A673 (cell line): ENCODE measurements at regions of chr14 and their contacts with region 1.

Region 1: DNA sequence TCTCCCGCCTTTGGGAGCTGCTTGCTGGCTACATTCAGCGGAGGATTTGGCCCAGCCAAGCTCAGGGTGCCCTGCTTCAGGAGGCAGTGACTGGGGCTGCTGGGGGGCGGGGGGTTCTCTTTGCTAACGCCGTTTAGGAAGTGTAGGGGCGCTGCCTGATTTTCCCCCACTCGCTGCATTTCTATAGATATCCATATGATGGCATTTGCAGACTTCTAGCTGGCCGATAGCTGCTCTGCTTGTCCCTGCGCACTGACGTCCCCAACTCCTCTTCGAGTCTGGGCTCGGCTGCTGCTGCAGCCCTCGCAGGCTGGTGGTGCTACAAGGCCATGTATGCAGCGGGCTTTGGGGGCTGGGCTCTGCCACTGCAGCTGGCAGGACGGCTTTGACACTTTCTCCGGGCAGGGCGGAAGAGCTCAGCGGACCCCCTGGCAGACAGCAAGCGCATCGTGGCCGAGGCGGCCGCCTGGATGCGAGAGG is 3.1 kb downstream of the LRFN5 start:
- DNase-seq: peak; percentile 95
- H3K4me3 ChIP-seq: peak overlapping the region; percentile 79
- H3K27ac ChIP-seq: peak overlapping the region; percentile 84
- H3K4me1 ChIP-seq: peaks cover 29% of the 10 kb centered on the region
- H3K27me3 ChIP-seq: no peaks in the 10 kb centered on the region
- CTCF ChIP-seq: peak; percentile 84

Region 2: DNA sequence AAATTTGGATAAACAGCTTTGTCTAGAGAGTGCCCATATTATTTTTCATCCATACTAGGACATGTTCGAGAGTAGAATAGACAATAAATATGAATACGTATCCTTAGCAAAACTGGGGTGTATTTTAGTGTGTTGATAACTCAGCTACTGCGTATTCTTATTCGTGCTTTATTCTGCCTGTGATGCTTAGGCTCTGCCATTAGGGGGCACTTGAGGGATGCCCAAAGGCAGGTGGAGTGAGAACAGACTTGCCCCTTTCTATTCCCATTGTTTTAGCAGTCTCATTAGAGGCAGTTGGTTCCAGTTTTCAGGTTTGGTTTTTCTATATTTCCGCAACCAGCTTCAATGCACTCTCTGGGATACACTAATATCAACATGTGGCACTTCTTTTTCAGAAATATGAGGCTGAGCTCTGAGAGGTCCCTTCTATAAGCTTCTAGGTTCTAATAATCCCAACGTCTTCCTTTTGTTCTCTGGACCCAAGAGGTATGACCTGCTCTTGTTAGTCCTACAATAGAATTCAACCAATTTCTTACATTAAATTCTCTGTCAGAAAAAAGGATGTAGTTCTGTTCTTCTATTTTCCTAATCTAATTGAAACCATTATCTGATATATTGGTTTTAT is 1191.9 kb before region 1 on chr14:
- CTCF ChIA-PET with region 1: no interaction called
- POLR2A ChIA-PET with region 1: no interaction called
- intact Hi-C with region 1: loop called (anchors 10 kb)
- DNase-seq: peak; percentile 66
- H3K4me3 ChIP-seq: peak overlapping the region; percentile 6
- H3K27ac ChIP-seq: no peak overlapping the region
- H3K4me1 ChIP-seq: no peaks in the 10 kb centered on the region
- H3K27me3 ChIP-seq: no peaks in the 10 kb centered on the region
- CTCF ChIP-seq: peak; percentile 89

Region 3: GRCh38 chr14:41806366-41807000 is 196.7 kb after region 1 on chr14:
- CTCF ChIA-PET with region 1: interaction called, 6 read pairs
- POLR2A ChIA-PET with region 1: interaction called, 6 read pairs
- intact Hi-C with region 1: loop called (anchors 1 kb)
- DNase-seq: no peak
- H3K4me3 ChIP-seq: no peak overlapping the region
- H3K27ac ChIP-seq: peak overlapping the region; percentile 82
- H3K4me1 ChIP-seq: peaks cover 30% of the 10 kb centered on the region
- H3K27me3 ChIP-seq: no peaks in the 10 kb centered on the region
- CTCF ChIP-seq: no peak

Region 4: GRCh38 chr14:41925409-41925808 is 315.7 kb after region 1 on chr14:
- CTCF ChIA-PET with region 1: interaction called, 4 read pairs
- POLR2A ChIA-PET with region 1: no interaction called
- intact Hi-C with region 1: loop called (anchors 1 kb)
- DNase-seq: peak; percentile 80
- H3K4me3 ChIP-seq: no peak overlapping the region
- H3K27ac ChIP-seq: no peak overlapping the region
- H3K4me1 ChIP-seq: peaks cover 9% of the 10 kb centered on the region
- H3K27me3 ChIP-seq: no peaks in the 10 kb centered on the region
- CTCF ChIP-seq: peak; percentile 73

Region 5: GRCh38 chr14:42192743-42193653 is 583.3 kb after region 1 on chr14:
- CTCF ChIA-PET with region 1: no interaction called
- POLR2A ChIA-PET with region 1: no interaction called
- intact Hi-C with region 1: loop called (anchors 10 kb)
- DNase-seq: peak; percentile 90
- H3K4me3 ChIP-seq: no peak overlapping the region
- H3K27ac ChIP-seq: peak overlapping the region; percentile 57
- H3K4me1 ChIP-seq: peaks cover 15% of the 10 kb centered on the region
- H3K27me3 ChIP-seq: no peaks in the 10 kb centered on the region
- CTCF ChIP-seq: no peak